ENCODE measurements at regions of chr7 and their contacts with region 1.

Region 1: DNA sequence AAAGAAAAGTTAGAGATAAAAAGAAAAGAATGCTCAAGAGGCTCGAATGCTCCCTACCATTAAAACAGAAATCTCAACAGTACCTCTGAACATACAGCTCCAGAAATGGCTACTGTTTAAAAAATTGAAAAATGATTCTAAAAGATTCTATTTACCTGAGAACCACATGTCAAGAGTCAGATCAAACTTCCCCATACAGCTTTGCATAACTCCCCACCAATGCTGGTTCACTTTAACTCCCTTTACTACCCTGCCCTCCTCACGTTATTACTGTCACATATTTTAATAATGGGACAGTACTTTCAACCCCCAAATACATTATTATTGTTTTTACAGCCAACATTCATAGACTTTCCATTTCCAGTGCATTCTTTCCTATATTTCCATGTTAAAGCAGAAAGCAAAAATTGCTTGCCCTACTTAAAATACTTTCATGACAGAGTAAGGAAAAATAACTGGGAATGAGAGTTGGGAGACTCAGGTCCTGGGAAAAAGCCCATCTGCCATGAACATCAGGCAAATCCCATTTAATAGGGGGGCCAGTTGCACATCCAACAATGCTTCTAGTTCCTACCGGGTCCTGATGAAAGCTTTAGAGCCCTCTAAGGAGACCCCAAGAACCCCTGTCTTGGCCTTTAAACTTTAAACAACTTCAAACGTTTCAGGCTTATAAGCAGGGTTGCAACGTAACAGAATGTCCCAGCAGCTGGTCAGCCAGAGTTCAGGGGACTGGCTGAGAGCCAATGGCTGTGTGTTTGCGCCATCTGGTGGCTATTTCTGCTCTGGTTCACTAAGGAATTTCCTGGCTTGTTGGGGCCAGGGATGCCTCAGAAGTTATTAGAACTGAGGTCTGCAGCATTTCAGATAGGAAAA is 247.4 kb downstream of the ELMO1 start:
- DNase-seq: peak; percentile 61
- ATAC-seq: peak; percentile 83
- H3K4me3 ChIP-seq: no peak overlapping the region
- H3K27ac ChIP-seq: no peak overlapping the region
- H3K4me1 ChIP-seq: 0 out of 4 replicates have a peak, but pooled peaks cover 0 to 4% of the 10 kb centered on the region in 2 experiments
- H3K27me3 ChIP-seq: no peaks in the 10 kb centered on the region
- CTCF ChIP-seq: peak; percentile 75 to 95 (median 79)
- POLR2A ChIP-seq: no peak
- RAD21 ChIP-seq: peak; percentile 83

Region 2: DNA sequence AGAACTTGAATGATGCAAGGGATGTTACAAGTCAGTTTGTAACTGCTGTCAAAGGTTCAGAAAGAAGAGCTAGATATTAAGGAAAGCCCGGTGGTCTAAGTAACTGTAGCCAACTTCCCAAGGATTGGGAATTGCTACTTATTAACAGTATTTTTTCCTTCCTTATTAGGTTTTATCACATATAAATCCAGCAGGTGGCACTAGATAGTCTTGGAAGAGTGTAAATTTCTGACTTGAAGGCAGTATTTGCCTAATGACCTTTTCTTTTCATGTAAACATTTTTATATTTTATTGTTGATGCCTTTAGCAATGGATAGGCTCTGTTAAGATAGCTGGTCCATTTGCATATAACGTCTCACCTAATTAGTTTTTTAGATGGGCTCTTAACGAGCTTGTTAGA is 760.4 kb before region 1 on chr7:
- CTCF ChIA-PET with region 1: interaction called, 12 read pairs
- POLR2A ChIA-PET with region 1: no interaction called
- RAD21 ChIA-PET with region 1: no interaction called
- intact Hi-C with region 1: loop called (anchors 1 kb)
- DNase-seq: peak; percentile 4
- ATAC-seq: peak; percentile 58; the same call in 1 of the 2 replicates
- H3K4me3 ChIP-seq: no peak overlapping the region
- H3K27ac ChIP-seq: no peak overlapping the region
- H3K4me1 ChIP-seq: no peaks in the 10 kb centered on the region
- H3K27me3 ChIP-seq: no peaks in the 10 kb centered on the region
- CTCF ChIP-seq: peak; percentile 21 to 54 (median 23); a peak in 4 of 6 replicates
- POLR2A ChIP-seq: no peak
- RAD21 ChIP-seq: peak; percentile 33

Region 3: GRCh38 chr7:36487756-36488336 is 713.4 kb before region 1 on chr7:
- CTCF ChIA-PET with region 1: interaction called, 12 read pairs
- POLR2A ChIA-PET with region 1: no interaction called
- RAD21 ChIA-PET with region 1: interaction called, 5 to 6 read pairs
- intact Hi-C with region 1: loop called (anchors 1 kb)
- DNase-seq: peak; percentile 59
- ATAC-seq: peak; percentile 67
- H3K4me3 ChIP-seq: no peak overlapping the region
- H3K27ac ChIP-seq: no peak overlapping the region
- H3K4me1 ChIP-seq: no peaks in the 10 kb centered on the region
- H3K27me3 ChIP-seq: no peaks in the 10 kb centered on the region
- CTCF ChIP-seq: peak; percentile 70 to 83 (median 82)
- POLR2A ChIP-seq: no peak
- RAD21 ChIP-seq: peak; percentile 93

Region 4: GRCh38 chr7:36863901-36864701 is 337.1 kb before region 1 on chr7:
- CTCF ChIA-PET with region 1: no interaction called
- POLR2A ChIA-PET with region 1: no interaction called
- RAD21 ChIA-PET with region 1: no interaction called
- intact Hi-C with region 1: no loop called
- DNase-seq: no peak
- ATAC-seq: no peak
- H3K4me3 ChIP-seq: no peak overlapping the region
- H3K27ac ChIP-seq: no peak overlapping the region
- H3K4me1 ChIP-seq: no peaks in the 10 kb centered on the region
- H3K27me3 ChIP-seq: no peaks in the 10 kb centered on the region
- CTCF ChIP-seq: no peak
- POLR2A ChIP-seq: no peak
- RAD21 ChIP-seq: no peak

Region 5: GRCh38 chr7:36967387-36967786 is 233.9 kb before region 1 on chr7:
- CTCF ChIA-PET with region 1: interaction called, 17 read pairs
- POLR2A ChIA-PET with region 1: no interaction called
- RAD21 ChIA-PET with region 1: interaction called in 1 of 2 experiments, 4 read pairs
- intact Hi-C with region 1: loop called (anchors 1 kb)
- DNase-seq: peak; percentile 78
- ATAC-seq: peak; percentile 98
- H3K4me3 ChIP-seq: no peak overlapping the region
- H3K27ac ChIP-seq: no peak overlapping the region
- H3K4me1 ChIP-seq: peaks cover 0 to 6% of the 10 kb centered on the region in 2 experiments; a peak in 1 of 4 replicates
- H3K27me3 ChIP-seq: no peaks in the 10 kb centered on the region
- CTCF ChIP-seq: peak; percentile 72 to 86 (median 74); a peak in 5 of 6 replicates
- POLR2A ChIP-seq: no peak
- RAD21 ChIP-seq: peak; percentile 82

Region 6: GRCh38 chr7:37027557-37028341 is 173.5 kb before region 1 on chr7:
- CTCF ChIA-PET with region 1: interaction called, 10 read pairs
- POLR2A ChIA-PET with region 1: no interaction called
- RAD21 ChIA-PET with region 1: no interaction called
- intact Hi-C with region 1: loop called (anchors 1 kb)
- DNase-seq: peak; percentile 6
- ATAC-seq: no peak
- H3K4me3 ChIP-seq: no peak overlapping the region
- H3K27ac ChIP-seq: no peak overlapping the region
- H3K4me1 ChIP-seq: peaks cover 31 to 43% of the 10 kb centered on the region in 2 experiments
- H3K27me3 ChIP-seq: no peaks in the 10 kb centered on the region
- CTCF ChIP-seq: peak in 1 of 3 experiments; percentile 21; a peak in 1 of 6 replicates
- POLR2A ChIP-seq: no peak
- RAD21 ChIP-seq: peak; percentile 59

Measured in HCT116 (cell line).